PC-3 (cell line): ENCODE measurements at regions of chr6 and their contacts with region 1.

Region 1: DNA sequence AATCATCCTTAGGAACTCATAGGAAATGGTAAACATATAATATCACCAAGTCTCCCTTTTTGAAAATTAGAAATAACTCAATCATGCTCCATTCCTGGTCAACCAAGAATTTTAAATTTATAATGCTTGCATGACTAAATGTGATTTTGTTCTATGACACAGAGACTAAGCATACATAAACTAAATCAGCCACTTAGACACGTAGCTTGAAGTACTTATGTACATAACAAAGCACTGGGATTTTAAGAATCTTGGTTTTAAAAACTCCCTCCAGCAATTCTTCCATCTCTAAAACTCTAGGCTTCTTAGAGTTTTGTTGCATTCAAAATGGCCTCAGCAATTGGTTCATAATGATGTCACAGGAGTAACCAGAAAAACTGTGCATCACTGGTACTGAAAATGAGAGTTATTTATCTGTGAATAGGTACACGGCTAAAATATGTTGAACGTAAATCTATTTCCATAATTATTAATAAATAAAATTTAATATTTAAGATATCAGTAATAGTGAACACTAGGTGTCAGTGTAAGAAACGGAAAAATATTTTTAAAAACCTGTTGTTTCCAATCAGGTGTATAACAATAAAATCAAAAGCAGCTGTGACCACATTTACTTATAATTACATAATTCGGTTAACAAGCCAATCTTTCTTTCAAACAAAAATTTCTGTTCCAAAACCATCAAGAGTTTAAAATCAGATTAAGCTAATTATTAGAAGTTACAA is 241.6 kb upstream of the RUNX2 start:
- DNase-seq: peak; percentile 37
- ATAC-seq: no peak
- H3K4me3 ChIP-seq: no peak overlapping the region
- H3K27ac ChIP-seq: no peak overlapping the region
- H3K4me1 ChIP-seq: no peaks in the 10 kb centered on the region
- H3K27me3 ChIP-seq: no peaks in the 10 kb centered on the region
- CTCF ChIP-seq: 0 out of 2 replicates have a peak, but pooled peaks have one; percentile 19

Region 2: DNA sequence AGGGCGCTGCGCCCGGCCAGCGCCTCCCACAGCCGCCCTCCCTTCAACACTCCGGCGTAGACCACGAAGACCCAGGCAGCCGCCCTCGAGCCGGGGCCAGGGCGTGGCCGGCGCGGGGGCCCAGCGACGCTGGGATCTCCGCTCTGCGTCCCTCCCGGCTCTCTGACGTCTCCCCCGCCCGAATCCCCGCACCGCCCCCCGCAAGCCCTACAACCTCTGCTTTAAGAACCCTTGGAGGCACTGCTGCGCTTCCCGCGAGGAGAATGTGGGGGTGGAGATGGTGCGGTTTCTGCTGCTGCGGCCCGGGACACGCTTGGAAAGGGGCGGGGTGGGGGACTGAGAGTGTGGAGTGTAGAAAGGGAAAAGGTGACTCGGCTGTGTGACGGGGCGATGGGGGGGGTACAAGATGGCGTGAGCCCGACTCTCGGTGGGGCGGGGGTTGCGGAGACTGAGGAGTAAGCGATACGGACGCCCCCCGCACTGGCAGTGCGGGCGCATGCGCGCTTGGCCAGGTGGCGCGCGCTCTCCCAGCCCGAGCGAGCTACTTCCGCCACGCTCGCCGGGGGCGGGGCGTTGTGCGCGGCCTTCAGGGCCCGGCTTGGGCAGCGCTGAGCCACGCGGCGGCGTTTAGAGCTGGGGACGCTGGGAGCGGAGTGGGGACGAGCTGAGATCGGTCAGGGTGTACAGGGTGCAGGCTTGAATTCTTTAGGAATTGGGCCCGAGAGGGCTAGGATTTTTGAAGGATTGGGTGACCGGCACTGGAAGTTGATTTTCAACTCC is 291.2 kb after region 1 on chr6 and contains the start of gene SUPT3H:
- CTCF ChIA-PET with region 1: no interaction called
- POLR2A ChIA-PET with region 1: no interaction called
- intact Hi-C with region 1: loop called (anchors 5 kb)
- DNase-seq: peak; percentile 97
- ATAC-seq: peak; percentile 94
- H3K4me3 ChIP-seq: peak within 1 kb of the TSS; percentile 92
- H3K27ac ChIP-seq: peak within 1 kb of the TSS; percentile 90
- H3K4me1 ChIP-seq: peaks cover 19% of the 10 kb centered on the region
- H3K27me3 ChIP-seq: no peaks in the 10 kb centered on the region
- CTCF ChIP-seq: peak; percentile 31
- total RNA-seq, gene SUPT3H: 3.6 and 4.0 TPM in 2 replicates